HepG2 (cell line): ENCODE measurements at regions of chr2 and their contacts with region 1.

Region 1: GRCh38 chr2:166539340-166540162 is 45.5 kb upstream of the SCN7A start:
- DNase-seq: peak; percentile 64
- ATAC-seq: peak; percentile 98
- H3K4me3 ChIP-seq: no peak overlapping the region
- H3K27ac ChIP-seq: no peak overlapping the region
- H3K4me1 ChIP-seq: no peaks in the 10 kb centered on the region
- H3K27me3 ChIP-seq: no peaks in the 10 kb centered on the region
- CTCF ChIP-seq: peak; percentile 92
- EP300 ChIP-seq: no peak
- POLR2A ChIP-seq: no peak
- RAD21 ChIP-seq: peak; percentile 83

Region 2: GRCh38 chr2:166805753-166806152 is 266.2 kb after region 1 on chr2:
- CTCF ChIA-PET with region 1: interaction called, 5 read pairs
- POLR2A ChIA-PET with region 1: no interaction called
- in situ Hi-C with region 1: no loop called
- intact Hi-C with region 1: loop called (anchors 2 kb)
- DNase-seq: peak; percentile 24
- ATAC-seq: peak; percentile 96
- H3K4me3 ChIP-seq: no peak overlapping the region
- H3K27ac ChIP-seq: no peak overlapping the region
- H3K4me1 ChIP-seq: no peaks in the 10 kb centered on the region
- H3K27me3 ChIP-seq: no peaks in the 10 kb centered on the region
- CTCF ChIP-seq: peak; percentile 81
- EP300 ChIP-seq: no peak
- POLR2A ChIP-seq: no peak
- RAD21 ChIP-seq: peak; percentile 70

Region 3: DNA sequence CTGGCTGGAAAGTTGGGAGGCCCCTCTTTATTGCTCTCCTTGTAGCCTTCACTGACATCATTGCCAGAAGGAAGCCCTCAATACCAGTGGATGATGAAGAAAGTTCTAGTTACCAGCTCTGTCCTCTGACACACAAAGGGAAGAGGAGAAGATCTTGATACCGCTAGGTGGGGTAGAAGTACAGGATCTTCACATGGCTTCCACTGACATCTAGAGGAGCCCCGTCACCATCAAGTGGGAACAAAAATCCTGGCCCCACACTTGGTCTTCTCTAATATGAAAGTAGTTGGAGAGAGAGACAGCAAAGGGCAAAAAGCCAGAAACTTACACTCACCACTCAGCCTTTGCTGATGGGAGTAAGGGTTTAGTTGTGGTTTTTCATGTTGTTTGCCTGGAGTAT is 361.1 kb after region 1 on chr2:
- CTCF ChIA-PET with region 1: no interaction called
- POLR2A ChIA-PET with region 1: no interaction called
- in situ Hi-C with region 1: loop called (anchors 10 kb)
- intact Hi-C with region 1: loop called (anchors 1 kb)
- DNase-seq: peak; percentile 67
- ATAC-seq: peak; percentile 99
- H3K4me3 ChIP-seq: no peak overlapping the region
- H3K27ac ChIP-seq: no peak overlapping the region
- H3K4me1 ChIP-seq: no peaks in the 10 kb centered on the region
- H3K27me3 ChIP-seq: no peaks in the 10 kb centered on the region
- CTCF ChIP-seq: peak; percentile 79
- EP300 ChIP-seq: no peak
- POLR2A ChIP-seq: no peak
- RAD21 ChIP-seq: peak; percentile 58; the same call in 1 of the 2 replicates

Region 4: DNA sequence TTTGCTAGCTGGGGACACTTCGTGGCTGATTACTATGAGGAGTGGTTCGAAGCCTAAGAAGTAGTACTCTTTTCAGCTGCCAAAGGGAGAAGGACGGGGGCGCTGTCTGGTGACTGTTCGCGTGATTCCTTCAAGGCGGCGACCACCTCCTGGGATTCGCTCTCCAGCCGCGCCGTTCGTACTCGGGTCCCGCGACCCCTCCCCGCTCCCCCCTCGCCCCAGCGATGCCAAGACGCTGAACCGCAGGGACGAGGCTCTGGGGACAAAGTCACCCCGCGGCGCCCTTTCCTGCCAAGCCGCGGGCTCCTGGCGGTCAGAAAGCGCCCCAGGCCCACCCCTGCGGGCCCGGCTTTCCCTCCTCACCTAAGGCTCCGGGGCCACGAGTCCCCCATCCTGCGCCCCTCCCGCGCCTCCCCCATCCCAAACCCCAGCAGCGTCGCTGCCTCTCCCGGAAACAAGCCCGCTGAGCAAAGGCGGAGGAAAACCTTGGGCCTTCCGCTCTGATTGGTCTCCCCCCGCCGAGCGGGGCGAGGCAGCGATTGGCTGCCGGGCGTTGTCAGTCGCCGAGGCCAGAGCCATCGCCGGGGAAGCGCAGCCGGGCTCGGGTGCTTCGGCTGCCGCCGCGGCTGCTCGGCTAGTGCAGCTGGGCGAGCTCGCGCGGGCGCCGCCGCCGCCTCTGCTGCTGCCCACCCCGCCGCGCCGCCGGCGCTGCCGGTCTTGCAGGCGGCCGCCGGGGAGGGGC is 753.0 kb after region 1 on chr2:
- CTCF ChIA-PET with region 1: no interaction called
- POLR2A ChIA-PET with region 1: no interaction called
- in situ Hi-C with region 1: no loop called
- intact Hi-C with region 1: loop called (anchors 1 kb)
- DNase-seq: peak; percentile 64
- ATAC-seq: peak; percentile 99
- H3K4me3 ChIP-seq: peak within 1 kb of the TSS; percentile 64 to 76 (median 75)
- H3K27ac ChIP-seq: no peak within 1 kb of the TSS
- H3K4me1 ChIP-seq: peaks cover 13% of the 10 kb centered on the region
- H3K27me3 ChIP-seq: peaks cover 3 to 25% of the 10 kb centered on the region in 2 experiments; a peak in 4 of 5 replicates
- CTCF ChIP-seq: peak; percentile 59
- EP300 ChIP-seq: no peak
- POLR2A ChIP-seq: no peak
- RAD21 ChIP-seq: 0 out of 2 replicates have a peak, but pooled peaks have one; percentile 11

Region 5: GRCh38 chr2:167411367-167411766 is 871.8 kb after region 1 on chr2:
- CTCF ChIA-PET with region 1: no interaction called
- POLR2A ChIA-PET with region 1: no interaction called
- in situ Hi-C with region 1: no loop called
- intact Hi-C with region 1: loop called (anchors 1 kb)
- DNase-seq: no peak
- ATAC-seq: no peak
- H3K4me3 ChIP-seq: no peak overlapping the region
- H3K27ac ChIP-seq: no peak overlapping the region
- H3K4me1 ChIP-seq: no peaks in the 10 kb centered on the region
- H3K27me3 ChIP-seq: no peaks in the 10 kb centered on the region
- CTCF ChIP-seq: peak; percentile 39
- EP300 ChIP-seq: no peak
- POLR2A ChIP-seq: no peak
- RAD21 ChIP-seq: no peak